ENCODE measurements at regions of chr3 and their contacts with region 1.

Region 1: DNA sequence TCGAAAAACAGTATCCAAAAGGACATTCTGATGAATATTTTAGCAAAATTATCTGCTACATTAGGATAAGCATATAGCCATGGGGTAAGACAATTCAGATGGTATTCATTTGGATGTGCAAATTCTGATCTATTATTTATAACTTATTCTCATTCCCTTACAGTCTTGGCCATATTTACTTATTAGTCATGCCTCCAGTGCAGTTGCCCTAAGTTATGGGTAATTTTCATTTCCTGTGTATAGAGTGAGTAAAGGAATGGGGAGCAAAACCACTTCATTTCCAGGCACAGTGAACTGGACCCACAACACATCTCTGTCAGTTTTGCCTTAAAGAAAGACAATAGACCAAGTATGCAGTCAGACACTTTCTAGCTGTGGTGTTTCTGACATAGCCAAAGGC is 134.3 kb downstream of the POLQ start:
- DNase-seq: peak; percentile 40
- ATAC-seq: peak; percentile 75
- H3K4me3 ChIP-seq: no peak overlapping the region
- H3K27ac ChIP-seq: no peak overlapping the region
- H3K4me1 ChIP-seq: no peaks in the 10 kb centered on the region
- H3K27me3 ChIP-seq: no peaks in the 10 kb centered on the region
- CTCF ChIP-seq: no peak
- POLR2A ChIP-seq: no peak
- RAD21 ChIP-seq: no peak

Region 2: DNA sequence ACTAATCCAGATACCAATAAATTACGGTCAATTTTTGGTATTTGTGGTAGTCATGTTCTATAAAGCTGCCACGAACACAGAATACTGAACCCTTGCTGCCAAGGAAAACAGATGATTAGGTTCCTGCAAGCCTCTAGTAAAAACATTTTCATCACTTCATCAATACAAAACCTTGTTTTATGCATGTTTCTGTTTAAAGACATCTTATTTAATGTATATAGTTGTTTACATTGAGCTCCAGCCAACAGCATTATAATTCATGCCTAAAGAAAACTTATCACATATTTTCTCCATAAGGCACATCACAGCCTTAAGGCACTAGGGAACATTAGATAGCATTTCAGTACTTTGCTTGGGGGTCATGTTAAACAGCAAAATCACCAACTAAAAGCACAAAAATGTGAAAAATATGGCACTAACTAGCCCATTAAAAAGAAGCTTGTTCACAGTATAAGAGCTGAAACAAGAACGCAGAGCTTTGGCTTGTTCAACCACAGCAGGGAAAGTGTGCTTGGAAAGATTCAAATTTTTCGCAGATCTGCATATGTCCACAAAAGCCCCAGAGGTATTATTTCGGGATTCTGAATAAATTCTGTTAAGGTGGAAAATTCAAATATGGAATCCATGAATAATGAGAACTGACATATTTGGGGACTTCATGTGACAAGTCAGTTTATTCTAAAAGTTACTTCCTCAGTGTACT is 106.6 kb after region 1 on chr3:
- CTCF ChIA-PET with region 1: no interaction called
- POLR2A ChIA-PET with region 1: no interaction called
- dilution Hi-C with region 1: no loop called
- in situ Hi-C with region 1: loop called (anchors 25 kb)
- intact Hi-C with region 1: no loop called
- DNase-seq: peak; percentile 11
- ATAC-seq: 0 out of 2 replicates have a peak, but pooled peaks have one; percentile 32
- H3K4me3 ChIP-seq: no peak overlapping the region
- H3K27ac ChIP-seq: no peak overlapping the region; the same call in 1 of the 2 replicates
- H3K4me1 ChIP-seq: no peaks in the 10 kb centered on the region; the same call in 1 of the 2 replicates
- H3K27me3 ChIP-seq: no peaks in the 10 kb centered on the region
- CTCF ChIP-seq: no peak
- POLR2A ChIP-seq: no peak
- RAD21 ChIP-seq: no peak

Measured in IMR-90 (cell line).